ENCODE measurements at regions of chr7 and their contacts with region 1.

Region 1: GRCh38 chr7:12686894-12687717 is at the start of gene ARL4A:
- DNase-seq: peak; percentile 86 to 90 (median 88)
- H3K4me3 ChIP-seq: peak within 1 kb of the TSS; percentile 61 to 89
- H3K4me3 Mint-ChIP-seq: peak within 1 kb of the TSS; percentile 94 to 100 (median 96)
- H3K27ac ChIP-seq: peak within 1 kb of the TSS; percentile 94
- H3K27ac Mint-ChIP-seq: peak within 1 kb of the TSS; percentile 91 to 99 (median 97)
- H3K4me1 ChIP-seq: peaks cover 21% of the 10 kb centered on the region
- H3K4me1 Mint-ChIP-seq: peaks cover 24 to 57% (median 36%) of the 10 kb centered on the region in 4 donors
- H3K27me3 ChIP-seq: no peaks in the 10 kb centered on the region
- H3K27me3 Mint-ChIP-seq: no peaks in the 10 kb centered on the region
- total RNA-seq, gene ARL4A: 11.6 to 12.9 TPM

Region 2: DNA sequence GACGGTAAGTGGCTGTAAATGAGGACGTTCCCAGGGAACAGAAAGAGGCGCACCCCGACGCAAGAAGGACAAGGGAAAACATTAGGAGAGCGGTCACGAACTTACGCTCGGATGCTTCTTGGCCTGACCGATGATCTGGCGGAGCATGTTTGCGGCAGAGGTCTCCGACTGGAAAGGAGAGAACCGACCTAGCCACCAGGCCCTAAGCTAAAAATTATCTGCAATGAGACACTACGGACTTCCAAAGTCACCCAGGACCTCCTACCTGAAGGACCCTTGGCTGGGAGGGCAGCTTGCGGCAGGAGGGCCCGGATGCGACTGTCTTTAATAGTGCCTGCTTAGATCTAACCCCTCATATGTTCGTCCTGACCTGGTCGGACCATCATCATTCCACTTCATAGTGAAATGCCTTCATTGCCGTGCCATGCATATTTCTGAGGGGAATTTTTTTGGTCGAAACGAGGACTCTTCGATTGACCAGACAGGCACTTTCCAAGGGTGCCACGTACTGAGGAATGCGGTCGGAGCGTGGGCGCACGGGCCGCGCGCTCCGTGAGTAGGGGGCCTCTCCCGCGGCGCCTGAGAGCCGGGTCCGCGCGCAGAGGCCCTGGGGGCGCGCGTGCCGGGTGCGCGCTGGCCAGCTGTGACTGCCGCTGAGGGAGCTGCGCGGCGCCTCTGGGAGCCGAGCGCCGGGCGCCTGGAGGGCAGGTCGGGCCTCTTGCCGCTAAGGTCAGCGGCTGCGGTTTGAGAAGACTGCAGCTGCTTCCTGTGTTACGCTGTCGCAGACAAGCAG is 1747.0 kb before region 1 on chr7:
- CTCF ChIA-PET with region 1: no interaction called
- POLR2A ChIA-PET with region 1: interaction called, 5 read pairs
- intact Hi-C with region 1: loop called (anchors 2 kb)
- DNase-seq: peak; percentile 91 to 94 (median 93)
- H3K4me3 ChIP-seq: peak overlapping the region; percentile 82 to 90
- H3K4me3 Mint-ChIP-seq: no peak overlapping the region
- H3K27ac ChIP-seq: peak overlapping the region; percentile 87
- H3K27ac Mint-ChIP-seq: no peak overlapping the region
- H3K4me1 ChIP-seq: peaks cover 27% of the 10 kb centered on the region
- H3K4me1 Mint-ChIP-seq: peaks cover 17 to 34% (median 18%) of the 10 kb centered on the region in 4 donors
- H3K27me3 ChIP-seq: no peaks in the 10 kb centered on the region
- H3K27me3 Mint-ChIP-seq: no peaks in the 10 kb centered on the region

Region 3: GRCh38 chr7:12257582-12257981 is 429.5 kb before region 1 on chr7:
- CTCF ChIA-PET with region 1: interaction called, 3 read pairs
- POLR2A ChIA-PET with region 1: interaction called, 3 read pairs
- intact Hi-C with region 1: loop called (anchors 10 kb)
- DNase-seq: peak; percentile 70 to 85 (median 78)
- H3K4me3 ChIP-seq: peak overlapping the region; percentile 7 to 50
- H3K4me3 Mint-ChIP-seq: no peak overlapping the region
- H3K27ac ChIP-seq: peak overlapping the region; percentile 62
- H3K27ac Mint-ChIP-seq: no peak overlapping the region
- H3K4me1 ChIP-seq: peaks cover 38% of the 10 kb centered on the region
- H3K4me1 Mint-ChIP-seq: peaks cover 4 to 8% (median 5%) of the 10 kb centered on the region in 4 donors
- H3K27me3 ChIP-seq: no peaks in the 10 kb centered on the region
- H3K27me3 Mint-ChIP-seq: no peaks in the 10 kb centered on the region

Region 4: GRCh38 chr7:12524794-12525386 is 162.2 kb before region 1 on chr7:
- CTCF ChIA-PET with region 1: interaction called, 3 read pairs
- POLR2A ChIA-PET with region 1: interaction called, 3 read pairs
- intact Hi-C with region 1: loop called (anchors 5 kb)
- DNase-seq: peak in 4 of 5 donors; percentile 27 to 41 (median 33)
- H3K4me3 ChIP-seq: no peak overlapping the region
- H3K4me3 Mint-ChIP-seq: no peak overlapping the region
- H3K27ac ChIP-seq: no peak overlapping the region
- H3K27ac Mint-ChIP-seq: no peak overlapping the region
- H3K4me1 ChIP-seq: no peaks in the 10 kb centered on the region
- H3K4me1 Mint-ChIP-seq: peaks cover 0 to 1% (median 0%) of the 10 kb centered on the region in 4 donors
- H3K27me3 ChIP-seq: peaks cover 5% of the 10 kb centered on the region
- H3K27me3 Mint-ChIP-seq: peaks cover 13 to 20% of the 10 kb centered on the region in 2 donors

Region 5: GRCh38 chr7:12674849-12675248 is 12.3 kb before region 1 on chr7:
- CTCF ChIA-PET with region 1: interaction called, 36 read pairs
- POLR2A ChIA-PET with region 1: interaction called, 28 read pairs
- intact Hi-C with region 1: loop called (anchors 1 kb)
- DNase-seq: peak; percentile 68 to 80 (median 70)
- H3K4me3 ChIP-seq: no peak overlapping the region
- H3K4me3 Mint-ChIP-seq: peak overlapping the region in 5 of 8 donors; percentile 4 to 24 (median 14)
- H3K27ac ChIP-seq: no peak overlapping the region
- H3K27ac Mint-ChIP-seq: peak overlapping the region; percentile 6 to 80 (median 67)
- H3K4me1 ChIP-seq: peaks cover 8% of the 10 kb centered on the region
- H3K4me1 Mint-ChIP-seq: peaks cover 11 to 19% (median 15%) of the 10 kb centered on the region in 4 donors
- H3K27me3 ChIP-seq: no peaks in the 10 kb centered on the region
- H3K27me3 Mint-ChIP-seq: no peaks in the 10 kb centered on the region

Region 6: DNA sequence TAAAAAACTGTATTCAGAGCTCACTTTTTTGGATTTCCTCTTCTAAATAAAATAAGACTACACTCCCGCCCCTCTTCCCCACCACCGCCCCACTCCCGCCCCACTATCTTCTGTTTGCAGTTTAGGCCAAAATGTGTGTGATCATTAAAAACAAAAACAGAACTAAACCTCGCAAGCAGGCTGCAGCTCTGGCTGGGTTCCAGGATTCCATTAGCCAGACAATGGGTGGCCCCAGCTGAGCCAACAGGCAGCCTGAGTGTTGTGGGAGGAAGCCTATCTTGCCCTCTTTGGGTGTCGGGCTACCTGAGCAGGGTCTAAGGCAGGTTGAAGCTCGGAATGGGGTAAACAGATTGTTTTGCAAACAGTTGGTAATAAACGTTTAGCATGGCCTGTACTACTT is 42.0 kb after region 1 on chr7:
- CTCF ChIA-PET with region 1: interaction called, 86 read pairs
- POLR2A ChIA-PET with region 1: interaction called, 33 read pairs
- intact Hi-C with region 1: loop called (anchors 1 kb)
- DNase-seq: no peak
- H3K4me3 ChIP-seq: no peak overlapping the region
- H3K4me3 Mint-ChIP-seq: no peak overlapping the region
- H3K27ac ChIP-seq: no peak overlapping the region
- H3K27ac Mint-ChIP-seq: no peak overlapping the region
- H3K4me1 ChIP-seq: peaks cover 32% of the 10 kb centered on the region
- H3K4me1 Mint-ChIP-seq: peaks cover 17 to 37% (median 18%) of the 10 kb centered on the region in 4 donors
- H3K27me3 ChIP-seq: no peaks in the 10 kb centered on the region
- H3K27me3 Mint-ChIP-seq: peaks cover 0 to 3% of the 10 kb centered on the region in 2 donors

Region 7: GRCh38 chr7:13257661-13258060 is 570.6 kb after region 1 on chr7:
- CTCF ChIA-PET with region 1: interaction called, 61 read pairs
- POLR2A ChIA-PET with region 1: no interaction called
- intact Hi-C with region 1: no loop called
- DNase-seq: no peak
- H3K4me3 ChIP-seq: no peak overlapping the region
- H3K4me3 Mint-ChIP-seq: no peak overlapping the region
- H3K27ac ChIP-seq: no peak overlapping the region
- H3K27ac Mint-ChIP-seq: no peak overlapping the region
- H3K4me1 ChIP-seq: no peaks in the 10 kb centered on the region
- H3K4me1 Mint-ChIP-seq: no peaks in the 10 kb centered on the region
- H3K27me3 ChIP-seq: no peaks in the 10 kb centered on the region
- H3K27me3 Mint-ChIP-seq: peaks cover 1 to 2% of the 10 kb centered on the region in 2 donors

Measured in CD4-positive, alpha-beta memory T cell (primary cell).